GM12878 (cell line): ENCODE measurements at regions of chr4 and their contacts with region 1.

Region 1: GRCh38 chr4:53702334-53703266 is 111.3 kb upstream of the LNX1 start:
- DNase-seq: peak; percentile 88
- ATAC-seq: peak; percentile 80
- H3K4me3 ChIP-seq: peak overlapping the region; percentile 45
- H3K27ac ChIP-seq: peak overlapping the region; percentile 64
- H3K4me1 ChIP-seq: peaks cover 49% of the 10 kb centered on the region
- H3K27me3 ChIP-seq: no peaks in the 10 kb centered on the region
- CTCF ChIP-seq: peak; percentile 32 to 37 (median 35); a peak in 4 of 6 replicates
- EP300 ChIP-seq: peak; percentile 63 to 80; a peak in 2 of 4 replicates
- POLR2A ChIP-seq: peak; percentile 60
- RAD21 ChIP-seq: peak; percentile 24; the same call in 1 of the 2 replicates

Region 2: DNA sequence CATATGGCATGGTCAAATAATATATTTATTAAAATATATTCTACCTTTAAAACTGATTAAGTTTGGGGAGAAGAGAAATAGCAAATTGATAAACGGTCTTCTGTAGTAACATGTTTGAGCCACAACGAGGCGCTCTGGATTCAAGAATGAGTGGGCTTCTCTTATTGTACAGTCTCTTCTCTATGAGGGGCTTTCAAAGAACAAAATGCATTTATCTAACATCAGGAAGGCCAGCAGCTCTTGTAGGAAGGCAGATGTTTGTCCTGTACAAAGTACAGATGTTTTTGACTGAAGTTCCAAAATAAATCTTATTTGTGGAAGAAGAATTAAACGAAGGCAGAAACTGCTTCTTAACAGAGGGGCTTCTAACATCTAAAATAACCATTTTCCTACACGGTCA is 686.9 kb before region 1 on chr4:
- CTCF ChIA-PET with region 1: interaction called, 6 read pairs
- POLR2A ChIA-PET with region 1: no interaction called
- RAD21 ChIA-PET with region 1: interaction called, 5 read pairs
- SMC1A ChIA-PET with region 1: interaction called, 6 read pairs
- in situ Hi-C with region 1: no loop called
- intact Hi-C with region 1: loop called (anchors 10 kb)
- DNase-seq: no peak
- ATAC-seq: 0 out of 3 replicates have a peak, but pooled peaks have one; percentile 25
- H3K4me3 ChIP-seq: no peak overlapping the region
- H3K27ac ChIP-seq: no peak overlapping the region
- H3K4me1 ChIP-seq: peaks cover 8% of the 10 kb centered on the region; the same call in 1 of the 2 replicates
- H3K27me3 ChIP-seq: no peaks in the 10 kb centered on the region
- CTCF ChIP-seq: peak; percentile 47 to 67 (median 55)
- EP300 ChIP-seq: no peak
- POLR2A ChIP-seq: no peak
- RAD21 ChIP-seq: peak; percentile 83

Region 3: DNA sequence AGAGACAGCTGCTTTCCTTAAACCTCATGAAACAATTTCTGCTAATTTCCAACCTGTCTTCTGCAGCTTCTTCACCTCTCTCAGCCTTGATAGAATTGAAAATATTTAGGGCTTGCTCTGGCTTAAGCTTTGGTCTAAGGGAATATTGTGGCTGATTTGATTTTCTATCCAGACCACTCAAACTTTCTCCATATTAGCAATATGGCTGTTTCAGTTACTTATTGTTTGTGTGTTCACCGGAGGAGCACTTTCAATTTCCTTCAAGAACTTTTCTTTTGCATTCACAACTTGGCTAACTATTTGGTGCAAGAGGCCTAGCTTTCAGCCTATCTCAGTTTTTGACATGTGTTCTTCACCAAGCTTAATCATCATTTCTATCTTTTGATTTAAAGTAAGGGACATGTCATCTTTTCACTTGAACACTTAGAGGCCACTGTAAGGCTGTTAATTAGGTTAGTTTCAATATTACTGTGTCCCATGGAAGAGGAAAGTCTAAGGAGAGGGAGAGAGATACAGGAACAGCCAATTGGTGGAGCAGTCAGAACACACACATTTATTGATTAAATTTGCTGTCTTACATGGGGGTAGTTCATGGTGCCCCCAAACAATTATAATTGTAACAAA is 627.3 kb before region 1 on chr4:
- CTCF ChIA-PET with region 1: no interaction called
- POLR2A ChIA-PET with region 1: no interaction called
- RAD21 ChIA-PET with region 1: no interaction called
- SMC1A ChIA-PET with region 1: no interaction called
- in situ Hi-C with region 1: no loop called
- intact Hi-C with region 1: no loop called
- DNase-seq: peak; percentile 13
- ATAC-seq: peak; percentile 68
- H3K4me3 ChIP-seq: no peak overlapping the region; the same call in 1 of the 2 replicates
- H3K27ac ChIP-seq: no peak overlapping the region
- H3K4me1 ChIP-seq: peaks cover 6% of the 10 kb centered on the region
- H3K27me3 ChIP-seq: no peaks in the 10 kb centered on the region
- CTCF ChIP-seq: no peak
- EP300 ChIP-seq: no peak
- POLR2A ChIP-seq: no peak
- RAD21 ChIP-seq: no peak

Region 4: GRCh38 chr4:53490965-53491622 is 211.5 kb before region 1 on chr4:
- CTCF ChIA-PET with region 1: interaction called, 9 read pairs
- POLR2A ChIA-PET with region 1: no interaction called
- RAD21 ChIA-PET with region 1: interaction called, 6 read pairs
- SMC1A ChIA-PET with region 1: interaction called, 14 read pairs
- in situ Hi-C with region 1: no loop called
- intact Hi-C with region 1: loop called (anchors 5 kb)
- DNase-seq: no peak
- ATAC-seq: peak; percentile 89
- H3K4me3 ChIP-seq: no peak overlapping the region
- H3K27ac ChIP-seq: no peak overlapping the region
- H3K4me1 ChIP-seq: no peaks in the 10 kb centered on the region
- H3K27me3 ChIP-seq: peaks cover 0 to 3% of the 10 kb centered on the region in 2 experiments; a peak in 1 of 4 replicates
- CTCF ChIP-seq: peak; percentile 53 to 67 (median 62)
- EP300 ChIP-seq: no peak
- POLR2A ChIP-seq: no peak
- RAD21 ChIP-seq: peak; percentile 64

Region 5: GRCh38 chr4:53653484-53654053 is 49.0 kb before region 1 on chr4:
- CTCF ChIA-PET with region 1: interaction called, 112 read pairs
- POLR2A ChIA-PET with region 1: interaction called, 27 read pairs
- RAD21 ChIA-PET with region 1: interaction called, 121 read pairs
- SMC1A ChIA-PET with region 1: interaction called, 110 read pairs
- in situ Hi-C with region 1: loop called (anchors 10 kb)
- intact Hi-C with region 1: loop called (anchors 1 kb)
- DNase-seq: peak; percentile 74
- ATAC-seq: peak; percentile 84
- H3K4me3 ChIP-seq: no peak overlapping the region
- H3K27ac ChIP-seq: peak overlapping the region; percentile 9; the same call in 1 of the 2 replicates
- H3K4me1 ChIP-seq: peaks cover 16% of the 10 kb centered on the region
- H3K27me3 ChIP-seq: no peaks in the 10 kb centered on the region
- CTCF ChIP-seq: peak; percentile 17 to 48 (median 21); a peak in 2 of 6 replicates
- EP300 ChIP-seq: peak; percentile 73 to 89; a peak in 3 of 4 replicates
- POLR2A ChIP-seq: no peak
- RAD21 ChIP-seq: peak; percentile 43; the same call in 1 of the 2 replicates

Region 6: DNA sequence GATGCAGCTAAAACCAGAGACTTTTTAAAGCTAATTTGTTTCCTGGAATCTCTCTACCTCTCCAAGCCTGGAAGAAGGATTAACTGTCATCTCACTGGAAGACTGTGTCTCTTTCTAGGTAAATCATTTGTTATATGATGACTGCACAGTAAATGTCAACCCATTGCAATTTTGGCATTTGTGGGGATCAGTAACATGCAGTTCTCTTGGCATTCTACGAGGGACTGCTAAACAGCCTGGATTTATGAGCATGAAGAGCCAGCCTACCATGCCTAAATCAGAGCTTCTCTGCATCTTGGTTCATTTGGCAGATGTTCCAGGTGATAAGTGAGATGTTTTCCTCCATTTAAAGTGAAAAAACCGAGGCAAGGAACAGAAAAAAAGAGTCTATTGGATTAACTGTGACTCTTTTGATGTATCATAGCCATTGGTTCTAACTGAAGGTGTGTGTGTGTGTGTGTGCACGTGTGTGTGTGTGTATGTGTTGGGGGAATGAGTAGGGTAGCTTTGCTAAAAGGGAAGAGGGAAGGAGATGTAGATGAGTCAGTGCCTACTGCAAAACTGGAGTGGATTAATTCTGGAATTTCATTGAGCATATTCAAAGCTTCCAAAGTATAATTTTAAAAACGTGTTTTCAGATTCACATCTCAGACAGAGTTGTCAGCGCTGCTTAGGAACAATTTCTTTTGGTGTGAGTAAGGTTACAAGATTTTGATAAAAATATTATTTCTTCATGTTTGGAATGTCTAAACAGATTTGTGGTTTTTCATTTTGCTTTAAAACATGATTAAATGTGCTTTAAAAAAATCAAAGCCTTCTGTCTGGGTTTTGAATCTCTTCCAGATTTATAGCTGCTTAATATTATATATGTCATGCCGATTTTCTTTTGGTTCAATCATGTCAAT is 11.9 kb after region 1 on chr4:
- CTCF ChIA-PET with region 1: interaction called, 32 read pairs
- POLR2A ChIA-PET with region 1: no interaction called
- RAD21 ChIA-PET with region 1: interaction called, 6 read pairs
- SMC1A ChIA-PET with region 1: interaction called, 9 read pairs
- in situ Hi-C with region 1: no loop called
- intact Hi-C with region 1: no loop called
- DNase-seq: no peak
- ATAC-seq: no peak
- H3K4me3 ChIP-seq: no peak overlapping the region
- H3K27ac ChIP-seq: no peak overlapping the region
- H3K4me1 ChIP-seq: no peaks in the 10 kb centered on the region
- H3K27me3 ChIP-seq: no peaks in the 10 kb centered on the region
- CTCF ChIP-seq: no peak
- EP300 ChIP-seq: no peak
- POLR2A ChIP-seq: no peak
- RAD21 ChIP-seq: no peak

Region 7: GRCh38 chr4:53790286-53790685 is 87.7 kb after region 1 on chr4:
- CTCF ChIA-PET with region 1: interaction called, 8 read pairs
- POLR2A ChIA-PET with region 1: interaction called, 5 read pairs
- RAD21 ChIA-PET with region 1: no interaction called
- SMC1A ChIA-PET with region 1: interaction called, 10 read pairs
- in situ Hi-C with region 1: no loop called
- intact Hi-C with region 1: no loop called
- DNase-seq: no peak
- ATAC-seq: no peak
- H3K4me3 ChIP-seq: no peak overlapping the region
- H3K27ac ChIP-seq: no peak overlapping the region
- H3K4me1 ChIP-seq: no peaks in the 10 kb centered on the region
- H3K27me3 ChIP-seq: no peaks in the 10 kb centered on the region; a peak in 1 of 4 replicates
- CTCF ChIP-seq: no peak
- EP300 ChIP-seq: no peak
- POLR2A ChIP-seq: no peak
- RAD21 ChIP-seq: no peak

Region 8: GRCh38 chr4:53929955-53930798 is 227.6 kb after region 1 on chr4:
- CTCF ChIA-PET with region 1: interaction called, 18 read pairs
- POLR2A ChIA-PET with region 1: no interaction called
- RAD21 ChIA-PET with region 1: interaction called, 12 read pairs
- SMC1A ChIA-PET with region 1: interaction called, 6 read pairs
- in situ Hi-C with region 1: no loop called
- intact Hi-C with region 1: no loop called
- DNase-seq: peak; percentile 13
- ATAC-seq: peak; percentile 87
- H3K4me3 ChIP-seq: no peak overlapping the region
- H3K27ac ChIP-seq: no peak overlapping the region
- H3K4me1 ChIP-seq: no peaks in the 10 kb centered on the region
- H3K27me3 ChIP-seq: no peaks in the 10 kb centered on the region; a peak in 1 of 4 replicates
- CTCF ChIP-seq: peak; percentile 63 to 78 (median 65)
- EP300 ChIP-seq: no peak
- POLR2A ChIP-seq: no peak
- RAD21 ChIP-seq: peak; percentile 91

Region 9: DNA sequence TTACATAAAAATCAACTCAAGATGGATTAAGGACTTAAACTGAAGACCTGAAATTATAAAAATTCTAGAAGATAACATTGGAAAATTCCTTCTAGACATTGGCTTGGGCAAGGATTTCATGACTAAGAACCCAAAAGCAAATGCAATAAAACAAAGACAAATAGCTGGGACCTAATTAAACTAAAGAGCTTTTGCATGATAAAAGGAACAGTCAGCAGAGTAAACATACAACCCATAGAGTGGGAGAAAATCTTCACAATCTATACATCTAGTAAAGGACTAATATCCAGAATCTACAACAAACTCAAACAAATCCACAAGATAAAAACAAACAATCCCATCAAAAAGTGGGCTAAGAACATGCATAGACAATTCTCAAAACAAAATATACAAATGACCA is 643.8 kb after region 1 on chr4:
- CTCF ChIA-PET with region 1: no interaction called
- POLR2A ChIA-PET with region 1: no interaction called
- RAD21 ChIA-PET with region 1: no interaction called
- SMC1A ChIA-PET with region 1: no interaction called
- in situ Hi-C with region 1: no loop called
- intact Hi-C with region 1: no loop called
- DNase-seq: no peak
- ATAC-seq: no peak
- H3K4me3 ChIP-seq: no peak overlapping the region
- H3K27ac ChIP-seq: no peak overlapping the region
- H3K4me1 ChIP-seq: no peaks in the 10 kb centered on the region
- H3K27me3 ChIP-seq: no peaks in the 10 kb centered on the region
- CTCF ChIP-seq: no peak
- EP300 ChIP-seq: no peak
- POLR2A ChIP-seq: no peak
- RAD21 ChIP-seq: no peak

Region 10: GRCh38 chr4:54709401-54709800 is 1006.8 kb after region 1 on chr4:
- CTCF ChIA-PET with region 1: no interaction called
- POLR2A ChIA-PET with region 1: no interaction called
- RAD21 ChIA-PET with region 1: no interaction called
- SMC1A ChIA-PET with region 1: no interaction called
- in situ Hi-C with region 1: no loop called
- intact Hi-C with region 1: no loop called
- DNase-seq: no peak
- ATAC-seq: no peak
- H3K4me3 ChIP-seq: no peak overlapping the region
- H3K27ac ChIP-seq: no peak overlapping the region
- H3K4me1 ChIP-seq: no peaks in the 10 kb centered on the region
- H3K27me3 ChIP-seq: no peaks in the 10 kb centered on the region
- CTCF ChIP-seq: no peak
- EP300 ChIP-seq: no peak
- POLR2A ChIP-seq: no peak
- RAD21 ChIP-seq: no peak